Natural killer cell (primary cell): ENCODE measurements at regions of chr12 and their contacts with region 1.

Region 1: GRCh38 chr12:130761537-130762318 is 45.6 kb upstream of the RIMBP2 start:
- DNase-seq: peak in 1 of 2 donors; percentile 74
- ATAC-seq: peak; percentile 30 to 45 (median 43)
- H3K4me3 ChIP-seq: no peak overlapping the region
- H3K4me3 Mint-ChIP-seq: no peak overlapping the region
- H3K27ac ChIP-seq: no peak overlapping the region
- H3K27ac Mint-ChIP-seq: no peak overlapping the region
- H3K4me1 ChIP-seq: peaks cover 19% of the 10 kb centered on the region
- H3K4me1 Mint-ChIP-seq: no peaks in the 10 kb centered on the region
- H3K27me3 ChIP-seq: peaks cover 2% of the 10 kb centered on the region
- H3K27me3 Mint-ChIP-seq: peaks cover 0 to 13% of the 10 kb centered on the region in 2 donors
- CTCF ChIP-seq: peak; percentile 18

Region 2: GRCh38 chr12:130818635-130819576 is 57.2 kb after region 1 on chr12:
- intact Hi-C with region 1: loop called (anchors 1 kb)
- DNase-seq: peak; percentile 79 to 90
- ATAC-seq: peak; percentile 88 to 92 (median 92)
- H3K4me3 ChIP-seq: peak overlapping the region; percentile 51
- H3K4me3 Mint-ChIP-seq: peak overlapping the region; percentile 95
- H3K27ac ChIP-seq: no peak overlapping the region
- H3K27ac Mint-ChIP-seq: peak overlapping the region; percentile 80 to 83
- H3K4me1 ChIP-seq: peaks cover 15% of the 10 kb centered on the region
- H3K4me1 Mint-ChIP-seq: peaks cover 6 to 16% of the 10 kb centered on the region in 2 donors
- H3K27me3 ChIP-seq: no peaks in the 10 kb centered on the region
- H3K27me3 Mint-ChIP-seq: no peaks in the 10 kb centered on the region
- CTCF ChIP-seq: peak; percentile 99